Caco-2 (cell line): ENCODE measurements at regions of chr5 and their contacts with region 1.

Region 1: DNA sequence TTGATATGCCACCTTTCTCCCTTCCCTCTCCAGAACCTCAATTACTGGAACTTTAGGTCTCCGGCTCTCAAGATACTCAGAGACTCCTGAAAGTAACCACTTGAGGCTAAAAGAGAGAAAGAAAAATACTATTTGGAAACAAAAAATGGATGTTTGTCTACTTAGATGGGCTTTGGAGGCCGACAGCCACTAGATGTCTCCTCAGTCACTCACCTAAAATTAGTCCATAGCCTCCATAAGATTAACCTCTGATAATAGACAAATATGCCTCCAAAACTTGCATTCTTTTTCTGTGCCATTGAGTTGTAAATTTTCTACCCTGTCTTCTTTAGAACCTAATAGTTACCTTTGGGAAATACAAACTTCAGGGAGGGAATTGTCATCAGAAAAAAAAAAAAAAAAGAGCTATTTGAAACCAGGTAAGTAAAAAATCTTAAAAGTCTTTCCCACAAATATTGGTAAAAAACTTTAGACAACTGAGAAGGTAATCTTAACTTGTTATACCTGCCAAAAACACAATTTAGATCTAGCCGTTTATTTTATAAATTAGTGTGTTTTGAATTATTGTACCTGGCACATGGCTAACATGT is 11.2 kb upstream of the PCDH1 start:
- DNase-seq: no peak
- H3K4me3 ChIP-seq: no peak overlapping the region
- H3K4me3 Mint-ChIP-seq: no peak overlapping the region
- H3K27ac Mint-ChIP-seq: no peak overlapping the region
- H3K4me1 ChIP-seq: no peaks in the 10 kb centered on the region
- H3K4me1 Mint-ChIP-seq: no peaks in the 10 kb centered on the region
- H3K27me3 ChIP-seq: no peaks in the 10 kb centered on the region
- H3K27me3 Mint-ChIP-seq: peaks cover 11% of the 10 kb centered on the region
- CTCF ChIP-seq: peak in 1 of 2 experiments; percentile 52

Region 2: GRCh38 chr5:141914199-141914743 is 24.9 kb after region 1 on chr5:
- CTCF ChIA-PET with region 1: interaction called, 3 read pairs
- POLR2A ChIA-PET with region 1: no interaction called
- intact Hi-C with region 1: loop called (anchors 1 kb)
- DNase-seq: peak; percentile 51 to 63
- H3K4me3 ChIP-seq: peak overlapping the region; percentile 33
- H3K4me3 Mint-ChIP-seq: peak overlapping the region; percentile 34
- H3K27ac Mint-ChIP-seq: no peak overlapping the region
- H3K4me1 ChIP-seq: peaks cover 6% of the 10 kb centered on the region
- H3K4me1 Mint-ChIP-seq: peaks cover 7% of the 10 kb centered on the region
- H3K27me3 ChIP-seq: no peaks in the 10 kb centered on the region
- H3K27me3 Mint-ChIP-seq: no peaks in the 10 kb centered on the region
- CTCF ChIP-seq: peak in 1 of 2 experiments; percentile 45